Naive thymus-derived CD8-positive, alpha-beta T cell (primary cell): ENCODE measurements at regions of chr10 and their contacts with region 1.

Region 1: GRCh38 chr10:110864662-110865140 is 7.0 kb upstream of the PDCD4 start:
- DNase-seq: peak in 9 of 10 donors; percentile 48 to 90 (median 80)
- ATAC-seq: peak; percentile 65 to 73
- H3K4me3 Mint-ChIP-seq: peak overlapping the region; percentile 62 to 94 (median 82)
- H3K27ac Mint-ChIP-seq: peak overlapping the region; percentile 97 to 100 (median 99)
- H3K4me1 Mint-ChIP-seq: peaks cover 60 to 100% (median 98%) of the 10 kb centered on the region in 4 donors
- H3K27me3 Mint-ChIP-seq: no peaks in the 10 kb centered on the region

Region 2: DNA sequence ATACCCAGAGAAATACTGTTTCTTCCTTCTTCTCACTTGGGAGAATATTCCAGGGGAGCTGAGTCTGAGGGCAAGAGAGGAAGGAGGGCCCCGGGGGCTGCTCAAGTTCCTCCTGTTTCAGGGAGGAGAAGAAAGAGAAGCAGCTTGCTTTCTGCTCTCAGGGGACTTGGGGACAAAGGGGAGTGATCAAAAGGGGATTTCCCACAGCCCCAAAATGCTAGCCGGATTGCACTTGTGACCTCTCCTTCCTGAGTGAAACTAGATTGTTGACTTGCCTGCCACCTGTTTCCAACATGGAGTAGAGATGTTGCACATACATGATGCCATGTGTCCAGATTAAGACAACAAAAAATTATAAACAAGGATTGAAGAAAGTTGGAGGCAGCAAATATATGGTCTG is 21.7 kb before region 1 on chr10:
- POLR2A ChIA-PET with region 1: interaction called, 78 read pairs
- DNase-seq: peak in 7 of 10 donors; percentile 37 to 57 (median 43)
- ATAC-seq: peak; percentile 84 to 92
- H3K4me3 Mint-ChIP-seq: peak overlapping the region in 9 of 10 donors; percentile 26 to 57 (median 40)
- H3K27ac Mint-ChIP-seq: peak overlapping the region; percentile 68 to 94 (median 84)
- H3K4me1 Mint-ChIP-seq: peaks cover 28 to 73% (median 62%) of the 10 kb centered on the region in 4 donors
- H3K27me3 Mint-ChIP-seq: no peaks in the 10 kb centered on the region

Region 3: DNA sequence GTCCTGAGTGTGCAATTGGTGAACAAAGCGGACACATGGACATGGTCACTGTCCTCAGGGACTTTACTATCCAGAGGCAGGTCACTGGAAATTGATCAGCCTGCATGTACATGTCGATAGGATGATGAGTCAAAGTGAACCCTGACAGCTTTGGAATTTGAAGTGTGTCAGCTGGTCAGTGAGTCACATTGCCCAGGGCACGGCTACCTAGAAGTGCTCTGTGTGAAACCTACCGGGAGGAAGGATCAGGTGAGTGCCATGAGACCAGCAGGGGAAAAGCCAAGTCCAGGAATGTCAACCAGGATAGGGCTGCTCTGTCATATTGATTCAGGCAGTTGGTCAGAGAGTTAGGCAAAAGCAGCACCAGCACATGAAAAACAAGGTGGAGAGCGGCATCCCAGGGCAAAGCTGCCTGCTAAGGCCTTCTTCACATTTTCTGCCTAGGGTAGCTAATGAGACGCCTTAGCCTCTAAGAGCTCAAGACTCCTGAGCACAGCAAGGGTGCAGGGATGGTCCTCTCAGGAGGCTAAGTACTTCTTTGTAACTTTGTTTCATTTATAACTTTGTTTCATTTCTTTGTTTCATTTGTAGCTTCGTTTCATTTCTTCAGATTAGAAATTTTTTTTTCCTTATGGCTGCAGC is 12.3 kb before region 1 on chr10:
- POLR2A ChIA-PET with region 1: interaction called, 44 read pairs
- DNase-seq: no peak
- ATAC-seq: peak; percentile 22 to 42
- H3K4me3 Mint-ChIP-seq: peak overlapping the region; percentile 2 to 75 (median 58)
- H3K27ac Mint-ChIP-seq: peak overlapping the region; percentile 60 to 87 (median 73)
- H3K4me1 Mint-ChIP-seq: peaks cover 34 to 83% (median 76%) of the 10 kb centered on the region in 4 donors
- H3K27me3 Mint-ChIP-seq: no peaks in the 10 kb centered on the region

Region 4: GRCh38 chr10:110918643-110919363 is 54.1 kb after region 1 on chr10 and contains the start of gene BBIP1:
- POLR2A ChIA-PET with region 1: interaction called, 24 read pairs
- DNase-seq: peak in 1 of 10 donors; percentile 89
- ATAC-seq: peak; percentile 89 to 94
- H3K4me3 Mint-ChIP-seq: peak within 1 kb of the TSS; percentile 89 to 100 (median 98)
- H3K27ac Mint-ChIP-seq: peak within 1 kb of the TSS; percentile 99 to 100 (median 100)
- H3K4me1 Mint-ChIP-seq: peaks cover 12 to 60% (median 45%) of the 10 kb centered on the region in 4 donors
- H3K27me3 Mint-ChIP-seq: no peaks in the 10 kb centered on the region
- polyA plus RNA-seq, gene BBIP1: 25.1 to 29.7 (median 29.0) TPM